H1 (cell line): ENCODE measurements at regions of chr17 and their contacts with region 1.

Region 1: GRCh38 chr17:9575381-9576101 is at the start of gene STX8:
- DNase-seq: peak; percentile 43 to 92
- H3K4me3 ChIP-seq: peak within 1 kb of the TSS; percentile 65 to 88 (median 82)
- H3K27ac ChIP-seq: no peak within 1 kb of the TSS
- H3K4me1 ChIP-seq: peaks cover 0 to 4% (median 4%) of the 10 kb centered on the region in 4 experiments; a peak in 4 of 7 replicates
- H3K27me3 ChIP-seq: no peaks in the 10 kb centered on the region; a peak in 1 of 7 replicates
- CTCF ChIP-seq: no peak
- EP300 ChIP-seq: no peak
- POLR2A ChIP-seq: no peak
- RAD21 ChIP-seq: no peak
- total RNA-seq, gene STX8: 42.5 and 44.0 TPM in 2 replicates

Region 2: GRCh38 chr17:9529033-9529700 is 46.4 kb before region 1 on chr17:
- CTCF ChIA-PET with region 1: no interaction called
- POLR2A ChIA-PET with region 1: no interaction called
- DNase-seq: no peak
- H3K4me3 ChIP-seq: no peak overlapping the region
- H3K27ac ChIP-seq: no peak overlapping the region
- H3K4me1 ChIP-seq: 0 out of 7 replicates have a peak, but pooled peaks cover 0 to 2% (median 0%) of the 10 kb centered on the region in 4 experiments
- H3K27me3 ChIP-seq: no peaks in the 10 kb centered on the region
- CTCF ChIP-seq: peak in 2 of 3 experiments; percentile 58 to 60; a peak in 3 of 4 replicates
- EP300 ChIP-seq: no peak
- POLR2A ChIP-seq: no peak
- RAD21 ChIP-seq: peak; percentile 84 to 87

Region 3: DNA sequence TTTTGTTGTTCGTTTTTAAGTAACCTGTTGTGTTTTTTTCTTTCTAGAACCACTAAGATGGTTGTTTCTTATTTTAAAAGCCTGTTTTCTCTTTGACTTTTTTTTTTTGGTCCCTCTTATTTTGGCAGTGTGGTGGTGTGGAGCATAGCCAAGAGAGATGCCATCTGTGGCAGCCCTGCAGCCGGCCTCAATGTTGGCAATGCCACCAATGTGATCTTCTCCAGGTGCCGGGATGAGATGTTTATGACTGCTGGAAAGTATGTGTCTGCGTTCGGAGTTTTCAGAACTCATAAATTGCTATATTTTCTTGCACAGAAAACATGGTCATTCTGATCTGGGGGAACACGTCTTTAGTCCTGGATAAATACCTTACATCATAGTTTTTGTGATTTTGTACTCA is 18.5 kb after region 1 on chr17:
- CTCF ChIA-PET with region 1: interaction called, 13 read pairs
- POLR2A ChIA-PET with region 1: interaction called, 3 read pairs
- DNase-seq: no peak
- H3K4me3 ChIP-seq: no peak overlapping the region
- H3K27ac ChIP-seq: no peak overlapping the region
- H3K4me1 ChIP-seq: no peaks in the 10 kb centered on the region
- H3K27me3 ChIP-seq: no peaks in the 10 kb centered on the region
- CTCF ChIP-seq: no peak
- EP300 ChIP-seq: no peak
- POLR2A ChIP-seq: no peak
- RAD21 ChIP-seq: no peak

Region 4: DNA sequence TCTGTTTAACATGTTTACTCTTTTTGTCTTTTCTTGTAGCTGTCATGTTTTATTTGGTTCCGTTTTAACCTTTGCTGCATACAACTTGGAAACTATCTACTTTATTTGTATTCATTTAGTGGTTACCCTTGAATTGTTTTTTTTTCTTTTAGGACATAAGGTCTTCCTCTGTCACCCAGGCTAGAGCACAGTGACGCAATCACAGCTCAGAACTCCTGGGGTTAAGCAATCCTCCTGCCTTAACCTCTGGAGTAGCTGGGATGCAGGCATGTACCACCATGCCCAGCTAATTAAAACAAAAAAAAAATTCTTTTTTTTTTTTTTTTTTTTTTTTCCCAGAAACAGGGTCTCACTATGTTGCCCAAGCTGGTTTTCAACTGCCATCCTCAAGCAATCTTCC is 39.9 kb after region 1 on chr17:
- CTCF ChIA-PET with region 1: no interaction called
- POLR2A ChIA-PET with region 1: no interaction called
- DNase-seq: no peak
- H3K4me3 ChIP-seq: no peak overlapping the region
- H3K27ac ChIP-seq: no peak overlapping the region
- H3K4me1 ChIP-seq: no peaks in the 10 kb centered on the region
- H3K27me3 ChIP-seq: no peaks in the 10 kb centered on the region
- CTCF ChIP-seq: no peak
- EP300 ChIP-seq: no peak
- POLR2A ChIP-seq: no peak
- RAD21 ChIP-seq: no peak

Region 5: DNA sequence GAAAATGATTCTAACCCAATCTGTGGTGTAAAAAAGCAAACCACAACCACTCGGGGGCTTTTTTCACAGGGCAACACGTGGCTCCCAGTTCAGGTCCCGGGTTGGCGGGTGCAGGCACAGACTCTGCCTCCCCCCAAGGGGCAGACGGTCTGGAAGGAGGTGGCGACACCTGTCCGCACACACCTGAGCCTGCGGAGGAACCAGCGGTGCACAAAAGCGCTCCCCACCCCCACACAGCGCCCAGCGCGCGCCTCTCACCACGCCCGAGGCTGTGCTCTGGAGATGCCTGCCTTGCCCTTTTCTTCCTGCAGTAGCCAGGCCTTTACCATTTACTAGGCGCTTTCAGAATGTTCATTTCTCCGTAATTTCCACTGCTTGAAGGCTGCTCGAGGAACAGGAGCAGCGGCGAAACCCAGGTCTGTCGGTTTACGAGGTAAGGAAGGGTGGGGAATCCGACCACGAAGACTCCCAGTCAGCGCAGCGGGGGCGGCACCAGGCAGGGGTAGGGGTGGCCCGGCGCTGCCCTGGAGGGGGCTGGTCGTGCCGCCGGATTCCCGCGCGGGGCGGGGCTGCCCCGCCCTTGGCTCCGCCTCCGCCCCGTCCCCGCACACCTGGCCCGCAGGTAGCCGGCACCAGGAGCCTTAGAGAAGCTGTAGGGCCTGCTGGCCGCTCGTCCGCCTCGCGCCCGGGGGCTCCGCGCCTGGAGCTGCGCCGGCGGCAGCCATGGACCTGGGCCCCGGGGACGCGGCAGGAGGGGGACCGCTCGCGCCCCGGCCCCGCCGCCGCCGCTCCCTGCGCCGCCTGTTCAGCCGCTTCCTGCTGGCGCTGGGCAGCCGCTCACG is 69.6 kb after region 1 on chr17 and contains the start of gene USP43:
- CTCF ChIA-PET with region 1: interaction called, 17 read pairs
- POLR2A ChIA-PET with region 1: interaction called, 6 read pairs
- DNase-seq: peak in 1 of 2 experiments; percentile 83
- H3K4me3 ChIP-seq: peak within 1 kb of the TSS; percentile 65 to 78 (median 72)
- H3K27ac ChIP-seq: peak within 1 kb of the TSS; percentile 81
- H3K4me1 ChIP-seq: peaks cover 1 to 18% (median 6%) of the 10 kb centered on the region in 4 experiments; a peak in 5 of 7 replicates
- H3K27me3 ChIP-seq: peaks cover 0 to 12% (median 8%) of the 10 kb centered on the region in 4 experiments; a peak in 6 of 7 replicates
- CTCF ChIP-seq: no peak
- EP300 ChIP-seq: no peak
- POLR2A ChIP-seq: peak; percentile 43 to 55
- RAD21 ChIP-seq: no peak
- total RNA-seq, gene USP43: 6.9 and 7.2 TPM in 2 replicates